CD8-positive, alpha-beta T cell (primary cell): ENCODE measurements at regions of chr17 and their contacts with region 1.

Region 1: DNA sequence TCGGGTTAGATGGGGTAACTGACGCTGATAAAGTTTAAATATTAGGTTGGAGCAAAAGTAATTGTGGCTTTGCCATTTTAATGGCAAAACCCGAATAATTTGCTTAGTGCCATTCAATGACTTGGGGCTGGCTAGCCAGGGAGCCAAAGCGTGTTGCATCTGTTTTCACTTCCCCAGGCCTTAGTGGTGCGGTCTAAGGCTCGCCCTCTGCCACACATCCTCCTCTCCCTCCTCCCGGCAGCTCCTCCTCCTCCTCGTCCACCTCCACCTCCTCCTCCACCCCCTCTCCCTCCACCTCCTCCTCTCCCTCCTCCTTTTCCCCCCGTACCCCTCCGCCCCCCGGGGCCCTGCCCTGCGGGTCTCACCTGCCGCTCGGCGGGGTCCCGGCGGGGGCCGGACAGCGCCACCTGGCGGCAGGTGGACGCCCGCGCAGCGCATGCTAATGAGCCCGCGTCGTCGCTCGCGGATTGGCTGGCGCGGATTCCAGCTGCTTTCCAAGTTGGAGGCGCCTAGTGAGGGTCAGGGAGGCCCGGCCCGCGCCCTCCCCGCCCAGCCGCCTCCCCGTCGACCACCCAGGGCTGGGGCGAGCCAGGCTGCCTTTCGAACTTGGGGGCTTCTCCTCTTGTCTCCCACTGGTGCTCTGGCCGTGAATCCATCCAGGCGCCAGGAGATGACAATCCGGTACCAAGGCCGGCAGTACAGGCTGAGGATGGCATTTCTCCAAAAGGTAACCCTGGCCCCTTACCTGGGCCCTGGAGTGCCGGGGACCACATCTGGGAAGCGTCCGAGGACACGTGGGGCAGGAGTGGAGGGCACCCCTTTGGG is 36.6 kb upstream of the RGS9 start:
- DNase-seq: peak; percentile 62 to 90 (median 82)
- ATAC-seq: peak; percentile 87
- H3K4me3 ChIP-seq: peak overlapping the region; percentile 38 to 62
- H3K4me3 Mint-ChIP-seq: peak overlapping the region; percentile 84
- H3K27ac ChIP-seq: peak overlapping the region; percentile 36 to 65
- H3K27ac Mint-ChIP-seq: peak overlapping the region; percentile 88
- H3K4me1 ChIP-seq: peaks cover 11% of the 10 kb centered on the region
- H3K4me1 Mint-ChIP-seq: peaks cover 19% of the 10 kb centered on the region
- H3K27me3 ChIP-seq: no peaks in the 10 kb centered on the region
- H3K27me3 Mint-ChIP-seq: no peaks in the 10 kb centered on the region
- CTCF ChIP-seq: peak; percentile 72

Region 2: DNA sequence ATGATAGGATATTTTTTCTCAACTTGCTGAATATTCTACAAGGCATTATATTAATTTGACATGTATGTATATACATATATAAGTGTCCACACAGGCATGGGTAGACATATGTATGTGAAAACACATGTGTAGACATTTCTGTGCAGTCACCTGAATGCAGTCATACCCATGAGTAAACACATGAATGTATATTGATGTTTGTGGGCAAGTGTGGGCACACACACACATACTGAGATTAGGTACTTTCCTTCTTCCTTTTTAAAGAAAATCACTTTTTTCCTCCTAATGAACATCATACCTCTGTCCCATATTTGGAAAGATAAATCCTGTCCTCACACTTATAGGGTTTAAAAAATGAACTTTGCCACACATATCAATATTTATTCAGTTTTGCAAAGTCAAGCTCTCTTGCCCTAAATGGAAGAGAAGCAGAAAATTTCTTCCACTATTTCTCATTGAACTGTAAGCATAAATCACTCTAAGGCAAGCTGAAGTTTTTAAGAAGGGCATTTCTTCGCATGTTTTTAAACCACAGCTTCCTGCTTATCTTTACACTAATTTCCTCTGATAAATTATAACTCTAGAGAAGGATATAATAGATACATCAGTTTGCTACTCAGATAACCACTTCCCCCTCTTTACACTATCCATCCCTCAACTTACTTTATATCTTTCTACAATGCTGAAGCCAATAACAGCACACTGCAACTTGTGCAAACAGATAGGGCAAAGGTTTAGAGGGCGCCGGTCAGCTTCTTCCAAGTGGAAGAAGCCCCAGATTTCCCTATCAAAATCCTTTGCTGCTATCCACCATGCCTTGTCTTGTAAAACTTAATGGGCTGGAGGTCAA is 131.7 kb before region 1 on chr17:
- CTCF ChIA-PET with region 1: interaction called, 5 read pairs
- POLR2A ChIA-PET with region 1: no interaction called
- intact Hi-C with region 1: loop called (anchors 1 kb)
- DNase-seq: peak in 2 of 9 experiments; percentile 53 to 72
- ATAC-seq: peak; percentile 15
- H3K4me3 ChIP-seq: no peak overlapping the region
- H3K4me3 Mint-ChIP-seq: peak overlapping the region; percentile 42
- H3K27ac ChIP-seq: peak overlapping the region; percentile 53 to 92
- H3K27ac Mint-ChIP-seq: peak overlapping the region; percentile 92
- H3K4me1 ChIP-seq: peaks cover 51% of the 10 kb centered on the region
- H3K4me1 Mint-ChIP-seq: peaks cover 65% of the 10 kb centered on the region
- H3K27me3 ChIP-seq: no peaks in the 10 kb centered on the region
- H3K27me3 Mint-ChIP-seq: no peaks in the 10 kb centered on the region
- CTCF ChIP-seq: no peak

Region 3: DNA sequence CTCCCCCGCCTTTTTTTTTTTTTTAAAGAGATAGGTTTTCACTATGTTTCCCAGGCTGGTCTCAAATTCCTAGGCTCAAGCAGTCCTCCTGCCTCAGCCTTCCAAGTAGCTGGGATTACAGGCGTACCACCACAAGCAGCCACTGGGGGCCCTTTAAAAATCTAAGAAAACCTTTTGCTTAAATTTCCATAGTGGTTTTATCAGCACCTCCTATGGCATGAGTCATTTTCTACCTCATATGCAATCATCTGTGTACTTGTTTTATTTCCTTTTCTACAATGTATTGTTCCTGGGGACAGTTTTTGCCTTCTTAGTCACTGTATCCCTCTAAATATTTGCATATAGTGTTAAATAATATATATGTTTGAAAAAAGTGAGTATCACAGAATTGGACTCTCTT is 73.2 kb before region 1 on chr17:
- CTCF ChIA-PET with region 1: interaction called, 3 read pairs
- POLR2A ChIA-PET with region 1: no interaction called
- intact Hi-C with region 1: loop called (anchors 1 kb)
- DNase-seq: peak in 5 of 9 experiments; percentile 49 to 80 (median 66)
- ATAC-seq: peak; percentile 81
- H3K4me3 ChIP-seq: no peak overlapping the region
- H3K4me3 Mint-ChIP-seq: peak overlapping the region; percentile 45
- H3K27ac ChIP-seq: peak overlapping the region in 1 of 2 experiments; percentile 55
- H3K27ac Mint-ChIP-seq: peak overlapping the region; percentile 75
- H3K4me1 ChIP-seq: peaks cover 63% of the 10 kb centered on the region
- H3K4me1 Mint-ChIP-seq: peaks cover 87% of the 10 kb centered on the region
- H3K27me3 ChIP-seq: no peaks in the 10 kb centered on the region
- H3K27me3 Mint-ChIP-seq: no peaks in the 10 kb centered on the region
- CTCF ChIP-seq: peak; percentile 59

Region 4: GRCh38 chr17:65122836-65123756 is 22.6 kb after region 1 on chr17:
- CTCF ChIA-PET with region 1: interaction called, 8 read pairs
- POLR2A ChIA-PET with region 1: interaction called, 3 read pairs
- intact Hi-C with region 1: loop called (anchors 1 to 2 kb)
- DNase-seq: peak; percentile 70 to 94 (median 81)
- ATAC-seq: peak; percentile 96
- H3K4me3 ChIP-seq: peak overlapping the region; percentile 40 to 70
- H3K4me3 Mint-ChIP-seq: peak overlapping the region; percentile 87
- H3K27ac ChIP-seq: peak overlapping the region; percentile 46 to 82
- H3K27ac Mint-ChIP-seq: peak overlapping the region; percentile 98
- H3K4me1 ChIP-seq: peaks cover 6% of the 10 kb centered on the region
- H3K4me1 Mint-ChIP-seq: peaks cover 14% of the 10 kb centered on the region
- H3K27me3 ChIP-seq: no peaks in the 10 kb centered on the region
- H3K27me3 Mint-ChIP-seq: peaks cover 5% of the 10 kb centered on the region
- CTCF ChIP-seq: no peak

Region 5: DNA sequence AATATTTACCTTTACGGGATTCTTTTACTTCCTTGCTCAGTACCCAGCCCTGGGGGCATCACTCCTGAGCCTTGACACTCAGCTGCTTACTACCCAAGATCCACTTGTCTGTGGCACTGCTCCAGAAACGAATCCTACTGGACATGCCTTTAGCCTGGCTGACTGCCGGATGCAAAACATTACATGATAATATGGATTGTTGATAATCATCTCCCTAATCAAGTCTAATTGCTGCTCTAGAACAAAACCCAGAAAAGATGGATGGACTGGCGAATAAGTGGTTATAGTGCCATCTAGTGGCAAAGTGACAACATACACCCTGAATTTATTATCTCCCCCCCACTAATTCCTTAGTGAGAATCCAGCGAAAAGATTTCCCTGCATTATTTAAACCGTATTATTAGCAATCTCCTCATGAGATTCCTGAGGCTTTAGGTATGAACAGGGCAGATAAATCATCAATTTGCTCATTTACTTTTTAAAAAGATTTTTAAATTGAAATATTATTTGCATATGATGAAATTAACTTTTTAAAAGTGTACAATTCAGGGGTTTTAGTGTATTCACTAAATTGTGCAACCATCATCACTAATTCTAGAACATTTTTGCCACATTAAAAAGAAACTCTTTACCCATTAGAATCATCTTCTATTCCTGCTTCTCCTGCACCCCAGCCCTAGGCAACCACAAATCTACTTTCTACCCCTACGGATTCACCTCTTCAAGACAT is 98.3 kb after region 1 on chr17:
- CTCF ChIA-PET with region 1: no interaction called
- POLR2A ChIA-PET with region 1: no interaction called
- intact Hi-C with region 1: loop called in 1 of 2 experiments (anchors 1 kb)
- DNase-seq: peak in 5 of 9 experiments; percentile 6 to 76 (median 52)
- ATAC-seq: peak; percentile 56
- H3K4me3 ChIP-seq: no peak overlapping the region
- H3K4me3 Mint-ChIP-seq: no peak overlapping the region
- H3K27ac ChIP-seq: no peak overlapping the region
- H3K27ac Mint-ChIP-seq: no peak overlapping the region
- H3K4me1 ChIP-seq: peaks cover 3% of the 10 kb centered on the region
- H3K4me1 Mint-ChIP-seq: peaks cover 5% of the 10 kb centered on the region
- H3K27me3 ChIP-seq: no peaks in the 10 kb centered on the region
- H3K27me3 Mint-ChIP-seq: no peaks in the 10 kb centered on the region
- CTCF ChIP-seq: peak; percentile 92